ENCODE measurements at regions of chr6 and their contacts with region 1.

Region 1: DNA sequence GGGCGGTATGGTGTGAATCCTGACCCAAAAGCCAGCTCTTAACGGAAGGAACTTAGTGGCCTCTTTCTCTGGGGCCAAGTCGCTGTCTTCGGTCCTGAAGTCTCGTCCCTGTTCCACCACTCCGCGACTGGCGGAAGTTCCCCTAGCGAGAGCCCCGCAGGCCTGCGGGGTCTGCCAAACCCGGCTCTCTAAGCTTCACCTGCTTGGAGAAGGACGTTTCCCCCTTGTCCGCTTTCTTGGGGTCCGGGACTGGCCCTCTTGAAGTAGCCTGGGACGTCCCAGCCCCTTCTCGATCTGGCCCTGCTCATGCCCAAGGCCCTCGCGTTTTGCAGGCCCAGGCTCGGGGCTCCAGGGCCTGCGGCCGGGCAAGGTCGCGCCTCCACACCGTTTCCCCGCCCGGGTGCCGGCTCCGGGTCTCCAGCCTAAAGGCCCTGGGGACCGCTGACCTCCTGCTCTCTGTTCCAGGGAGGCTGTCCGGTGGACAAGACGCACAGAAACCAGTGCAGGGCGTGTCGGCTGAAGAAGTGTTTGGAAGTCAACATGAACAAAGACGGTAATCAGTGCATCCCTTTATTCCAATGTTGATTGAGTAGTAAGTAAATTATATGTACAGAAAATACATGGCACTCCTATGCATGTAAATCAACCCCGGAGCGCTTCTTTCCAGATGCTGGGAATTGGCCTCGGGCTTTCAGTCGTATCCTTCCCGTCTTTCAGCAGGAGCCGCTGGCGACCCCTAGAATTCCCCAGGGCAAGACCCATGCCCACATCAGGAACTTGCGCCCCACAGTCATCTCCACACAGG is 8.8 kb downstream of the NR2E1 start:
- DNase-seq: peak; percentile 66
- ATAC-seq: peak; percentile 55
- H3K4me3 Mint-ChIP-seq: no peak overlapping the region
- H3K27ac Mint-ChIP-seq: no peak overlapping the region
- H3K4me1 Mint-ChIP-seq: peaks cover 24% of the 10 kb centered on the region
- H3K27me3 Mint-ChIP-seq: peaks cover 78% of the 10 kb centered on the region

Region 2: DNA sequence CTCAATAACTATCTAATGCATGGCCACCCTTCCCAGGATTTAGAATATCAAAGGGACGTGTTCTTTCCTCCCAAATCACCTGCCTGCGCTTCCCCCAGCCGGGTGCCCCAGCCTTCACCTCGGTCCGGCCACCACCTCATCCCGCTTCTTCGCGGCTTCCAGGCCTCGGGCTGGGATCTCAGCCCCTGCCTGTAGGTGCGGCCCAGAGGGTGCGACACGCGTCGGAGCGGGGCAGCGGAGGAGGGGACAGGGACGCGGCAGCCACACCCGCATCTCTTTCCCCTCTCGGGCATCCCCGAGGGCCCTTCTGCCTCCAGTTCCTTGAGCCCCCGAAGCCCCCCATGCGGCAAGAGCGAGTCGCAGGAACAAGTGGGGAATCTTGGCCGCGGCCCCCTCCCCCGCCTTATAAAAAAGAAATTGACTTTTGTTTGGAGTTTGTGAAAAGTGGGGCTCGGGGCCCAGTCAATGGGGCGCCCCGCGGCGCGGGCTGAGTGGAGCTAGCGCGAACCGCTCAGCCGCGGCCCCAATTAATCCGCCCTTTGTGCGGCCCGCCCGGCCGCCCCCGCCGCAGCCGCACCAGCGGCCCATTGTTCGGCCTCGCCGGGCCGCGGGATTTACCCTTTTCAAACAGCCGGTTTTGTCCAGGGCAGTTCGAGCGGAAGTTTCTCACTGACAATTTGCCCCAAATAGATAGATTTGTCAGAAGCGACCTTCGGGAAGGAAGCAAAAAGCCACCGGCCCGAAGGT is 17.2 kb before region 1 on chr6:
- CTCF ChIA-PET with region 1: interaction called, 8 read pairs
- POLR2A ChIA-PET with region 1: no interaction called
- intact Hi-C with region 1: loop called in 1 of 2 experiments (anchors 2 kb)
- DNase-seq: no peak
- ATAC-seq: no peak
- H3K4me3 Mint-ChIP-seq: no peak overlapping the region
- H3K27ac Mint-ChIP-seq: no peak overlapping the region
- H3K4me1 Mint-ChIP-seq: peaks cover 13% of the 10 kb centered on the region
- H3K27me3 Mint-ChIP-seq: peaks cover 69% of the 10 kb centered on the region

Region 3: GRCh38 chr6:108492131-108492766 is 317.7 kb after region 1 on chr6:
- CTCF ChIA-PET with region 1: interaction called, 12 read pairs
- POLR2A ChIA-PET with region 1: no interaction called
- intact Hi-C with region 1: loop called (anchors 2 to 5 kb)
- DNase-seq: no peak
- ATAC-seq: peak; percentile 44
- H3K4me3 Mint-ChIP-seq: no peak overlapping the region
- H3K27ac Mint-ChIP-seq: no peak overlapping the region
- H3K4me1 Mint-ChIP-seq: no peaks in the 10 kb centered on the region
- H3K27me3 Mint-ChIP-seq: no peaks in the 10 kb centered on the region

Region 4: DNA sequence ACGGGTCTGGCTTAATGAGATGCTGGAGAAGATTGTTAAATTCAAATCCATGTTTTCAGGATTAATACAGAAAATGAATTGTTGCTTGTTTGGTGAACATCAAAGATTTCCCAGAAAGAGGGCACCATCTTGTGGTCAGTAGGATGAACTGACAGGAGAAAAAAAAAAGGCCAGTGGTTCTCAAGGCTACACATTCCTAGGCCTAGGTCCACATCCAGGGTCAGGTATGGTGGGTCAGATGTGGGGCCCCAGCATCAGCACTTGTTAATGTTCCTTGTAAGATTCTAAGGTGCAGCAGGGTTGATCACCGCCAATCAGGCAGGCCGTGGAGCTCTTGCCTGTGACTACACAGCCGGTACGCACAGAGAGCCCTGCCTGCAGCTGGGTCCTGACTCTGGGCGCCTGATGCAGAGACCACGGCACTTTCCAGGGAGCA is 352.2 kb after region 1 on chr6:
- CTCF ChIA-PET with region 1: no interaction called
- POLR2A ChIA-PET with region 1: no interaction called
- intact Hi-C with region 1: loop called in 1 of 2 experiments (anchors 10 kb)
- DNase-seq: no peak
- ATAC-seq: no peak
- H3K4me3 Mint-ChIP-seq: no peak overlapping the region
- H3K27ac Mint-ChIP-seq: no peak overlapping the region
- H3K4me1 Mint-ChIP-seq: no peaks in the 10 kb centered on the region
- H3K27me3 Mint-ChIP-seq: no peaks in the 10 kb centered on the region